GM12878 (cell line): ENCODE measurements at regions of chr22 and their contacts with region 1.

Region 1: DNA sequence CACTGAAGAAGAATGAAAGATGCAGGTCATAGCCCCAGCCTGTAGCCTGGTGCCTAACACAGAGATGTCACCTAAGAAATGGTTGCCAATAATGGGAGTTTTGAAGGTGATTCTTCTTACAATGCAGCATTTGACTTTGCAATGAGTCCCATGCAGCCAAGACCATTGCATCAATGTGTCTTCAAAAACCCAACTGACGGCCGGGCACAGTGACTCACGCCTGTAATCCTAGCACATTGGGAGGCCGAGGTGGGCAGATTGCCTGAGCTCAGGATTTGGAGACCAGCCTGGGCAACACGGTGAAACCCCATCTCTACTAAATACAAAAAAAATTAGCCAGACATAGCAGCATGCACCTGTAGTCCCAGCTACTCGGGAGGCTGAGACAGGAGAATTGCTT is 89.3 kb upstream of the ASPHD2 start:
- DNase-seq: no peak
- ATAC-seq: no peak
- H3K4me3 ChIP-seq: no peak overlapping the region
- H3K27ac ChIP-seq: no peak overlapping the region
- H3K4me1 ChIP-seq: no peaks in the 10 kb centered on the region
- H3K27me3 ChIP-seq: peaks cover 2 to 5% of the 10 kb centered on the region in 2 experiments; a peak in 1 of 4 replicates
- CTCF ChIP-seq: no peak
- EP300 ChIP-seq: no peak
- POLR2A ChIP-seq: no peak
- RAD21 ChIP-seq: no peak

Region 2: GRCh38 chr22:25475257-25476022 is 864.3 kb before region 1 on chr22:
- CTCF ChIA-PET with region 1: no interaction called
- POLR2A ChIA-PET with region 1: no interaction called
- RAD21 ChIA-PET with region 1: no interaction called
- SMC1A ChIA-PET with region 1: no interaction called
- in situ Hi-C with region 1: loop called (anchors 5 kb)
- intact Hi-C with region 1: no loop called
- DNase-seq: no peak
- ATAC-seq: peak; percentile 41
- H3K4me3 ChIP-seq: no peak overlapping the region
- H3K27ac ChIP-seq: no peak overlapping the region
- H3K4me1 ChIP-seq: peaks cover 4% of the 10 kb centered on the region
- H3K27me3 ChIP-seq: no peaks in the 10 kb centered on the region
- CTCF ChIP-seq: no peak
- EP300 ChIP-seq: no peak
- POLR2A ChIP-seq: no peak
- RAD21 ChIP-seq: no peak

Region 3: DNA sequence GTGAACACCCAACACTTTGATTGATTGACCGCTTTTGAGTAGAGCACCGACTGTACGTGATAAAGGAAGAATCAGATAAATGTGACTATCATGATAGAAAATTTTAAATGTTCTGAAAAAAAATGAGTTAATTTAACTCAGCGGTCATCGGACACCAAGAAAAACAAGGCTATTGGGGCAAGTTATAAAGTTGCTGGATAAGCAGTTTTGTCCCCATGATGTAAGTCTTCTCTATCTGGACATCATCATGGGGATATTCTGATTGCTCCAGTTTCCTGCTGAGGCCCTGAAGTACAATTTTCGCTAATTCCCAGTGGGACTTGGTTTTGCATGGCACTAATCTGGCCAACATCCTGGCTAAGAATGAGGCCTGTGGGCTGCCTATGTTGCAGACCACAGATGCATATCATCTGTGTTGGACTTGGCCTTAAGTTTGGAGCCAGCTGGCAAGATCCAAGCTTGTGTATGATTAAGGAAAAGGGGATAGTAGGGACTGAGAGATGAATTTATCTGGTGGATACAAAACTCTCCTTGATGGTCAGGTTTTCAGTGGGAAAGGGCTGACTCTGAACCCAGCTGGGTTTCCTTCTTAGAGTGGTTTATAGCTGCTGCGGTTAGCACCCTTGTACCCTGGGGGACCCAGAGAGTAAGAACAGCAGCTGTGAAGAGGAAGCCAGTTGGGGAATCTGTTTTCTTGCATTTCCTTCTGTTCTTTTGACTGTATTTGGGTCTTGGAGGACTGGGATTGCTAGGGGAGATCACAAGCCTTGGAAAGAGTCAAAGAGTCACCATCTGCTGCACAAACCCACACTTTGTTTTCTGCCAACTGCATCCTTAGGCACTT is 52.2 kb before region 1 on chr22:
- CTCF ChIA-PET with region 1: no interaction called
- POLR2A ChIA-PET with region 1: no interaction called
- RAD21 ChIA-PET with region 1: no interaction called
- SMC1A ChIA-PET with region 1: no interaction called
- in situ Hi-C with region 1: no loop called
- intact Hi-C with region 1: loop called (anchors 10 kb)
- DNase-seq: no peak
- ATAC-seq: no peak
- H3K4me3 ChIP-seq: no peak overlapping the region
- H3K27ac ChIP-seq: no peak overlapping the region
- H3K4me1 ChIP-seq: no peaks in the 10 kb centered on the region
- H3K27me3 ChIP-seq: no peaks in the 10 kb centered on the region
- CTCF ChIP-seq: no peak
- EP300 ChIP-seq: no peak
- POLR2A ChIP-seq: no peak
- RAD21 ChIP-seq: no peak

Region 4: DNA sequence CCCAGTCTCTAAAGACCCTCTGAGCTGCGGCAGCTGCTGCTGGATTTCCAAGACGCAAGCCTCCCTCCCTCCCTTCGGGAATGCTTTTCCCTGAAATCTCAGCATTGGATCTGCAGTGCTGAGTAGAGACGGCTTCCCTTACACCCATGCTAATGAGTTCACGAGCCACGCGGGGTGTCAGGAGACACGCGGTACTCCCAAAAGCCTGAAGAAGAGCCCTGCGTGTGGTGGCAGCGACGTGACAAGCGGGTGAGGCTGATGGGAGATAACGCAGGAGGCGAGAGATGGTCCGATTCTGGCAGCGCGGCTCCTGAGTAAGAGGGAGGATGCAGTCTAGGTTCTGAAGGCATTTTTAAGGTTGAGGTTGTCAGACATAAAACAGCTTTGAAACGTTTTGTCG is 15.0 kb after region 1 on chr22:
- CTCF ChIA-PET with region 1: no interaction called
- POLR2A ChIA-PET with region 1: no interaction called
- RAD21 ChIA-PET with region 1: no interaction called
- SMC1A ChIA-PET with region 1: no interaction called
- in situ Hi-C with region 1: no loop called
- intact Hi-C with region 1: no loop called
- DNase-seq: no peak
- ATAC-seq: no peak
- H3K4me3 ChIP-seq: no peak overlapping the region
- H3K27ac ChIP-seq: no peak overlapping the region
- H3K4me1 ChIP-seq: no peaks in the 10 kb centered on the region
- H3K27me3 ChIP-seq: no peaks in the 10 kb centered on the region
- CTCF ChIP-seq: no peak
- EP300 ChIP-seq: no peak
- POLR2A ChIP-seq: no peak
- RAD21 ChIP-seq: no peak

Region 5: GRCh38 chr22:26372890-26373289 is 33.1 kb after region 1 on chr22:
- CTCF ChIA-PET with region 1: no interaction called
- POLR2A ChIA-PET with region 1: no interaction called
- RAD21 ChIA-PET with region 1: no interaction called
- SMC1A ChIA-PET with region 1: no interaction called
- in situ Hi-C with region 1: no loop called
- intact Hi-C with region 1: no loop called
- DNase-seq: no peak
- ATAC-seq: no peak
- H3K4me3 ChIP-seq: no peak overlapping the region
- H3K27ac ChIP-seq: no peak overlapping the region
- H3K4me1 ChIP-seq: no peaks in the 10 kb centered on the region
- H3K27me3 ChIP-seq: no peaks in the 10 kb centered on the region; a peak in 1 of 4 replicates
- CTCF ChIP-seq: no peak
- EP300 ChIP-seq: no peak
- POLR2A ChIP-seq: no peak
- RAD21 ChIP-seq: no peak

Region 6: DNA sequence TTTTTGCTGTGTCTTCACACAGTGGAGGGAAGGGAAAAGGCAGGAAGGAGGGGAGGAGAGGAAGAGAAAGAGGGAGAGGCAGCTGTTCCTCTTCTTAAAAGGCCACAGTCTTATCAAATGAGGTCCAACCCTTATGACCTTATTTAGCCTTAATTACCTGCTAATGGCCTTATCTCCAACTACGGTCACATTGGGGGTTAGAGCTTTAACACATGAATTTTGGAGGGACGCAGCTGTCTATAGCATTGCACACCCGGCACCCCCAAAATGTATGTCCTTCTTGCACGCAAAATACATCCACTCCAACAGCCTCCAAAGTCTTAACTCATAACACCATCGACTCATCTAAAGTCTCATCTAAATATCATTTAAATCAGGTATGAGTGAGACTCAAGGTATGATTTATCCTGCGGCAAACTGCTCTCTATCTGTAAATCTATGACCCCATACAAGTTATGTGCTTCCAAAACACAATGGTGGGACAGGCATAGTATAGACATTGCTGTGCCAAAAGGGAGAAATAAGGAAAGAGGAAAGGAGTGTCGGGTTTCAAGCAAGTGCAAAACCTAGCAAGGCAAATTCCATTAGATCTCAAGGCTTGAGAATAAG is 44.3 kb after region 1 on chr22:
- CTCF ChIA-PET with region 1: no interaction called
- POLR2A ChIA-PET with region 1: no interaction called
- RAD21 ChIA-PET with region 1: no interaction called
- SMC1A ChIA-PET with region 1: no interaction called
- in situ Hi-C with region 1: no loop called
- intact Hi-C with region 1: no loop called
- DNase-seq: no peak
- ATAC-seq: no peak
- H3K4me3 ChIP-seq: no peak overlapping the region
- H3K27ac ChIP-seq: no peak overlapping the region
- H3K4me1 ChIP-seq: no peaks in the 10 kb centered on the region
- H3K27me3 ChIP-seq: peaks cover 3 to 6% of the 10 kb centered on the region in 2 experiments
- CTCF ChIP-seq: no peak
- EP300 ChIP-seq: no peak
- POLR2A ChIP-seq: no peak
- RAD21 ChIP-seq: no peak

Region 7: GRCh38 chr22:26445577-26446275 is 106.0 kb after region 1 on chr22:
- CTCF ChIA-PET with region 1: no interaction called
- POLR2A ChIA-PET with region 1: no interaction called
- RAD21 ChIA-PET with region 1: no interaction called
- SMC1A ChIA-PET with region 1: no interaction called
- in situ Hi-C with region 1: no loop called
- intact Hi-C with region 1: no loop called
- DNase-seq: no peak
- ATAC-seq: no peak
- H3K4me3 ChIP-seq: no peak overlapping the region
- H3K27ac ChIP-seq: no peak overlapping the region
- H3K4me1 ChIP-seq: no peaks in the 10 kb centered on the region
- H3K27me3 ChIP-seq: no peaks in the 10 kb centered on the region
- CTCF ChIP-seq: no peak
- EP300 ChIP-seq: no peak
- POLR2A ChIP-seq: no peak
- RAD21 ChIP-seq: no peak